SK-N-SH (cell line): ENCODE measurements at regions of chr6 and their contacts with region 1.

Region 1: GRCh38 chr6:11064836-11065235 is 20.7 kb upstream of the ELOVL2 start:
- DNase-seq: peak; percentile 39
- H3K4me3 ChIP-seq: no peak overlapping the region
- H3K27ac ChIP-seq: no peak overlapping the region
- H3K4me1 ChIP-seq: peaks cover 0 to 3% of the 10 kb centered on the region in 2 experiments; a peak in 1 of 4 replicates
- H3K27me3 ChIP-seq: no peaks in the 10 kb centered on the region
- CTCF ChIP-seq: no peak
- EP300 ChIP-seq: no peak
- RAD21 ChIP-seq: no peak

Region 2: DNA sequence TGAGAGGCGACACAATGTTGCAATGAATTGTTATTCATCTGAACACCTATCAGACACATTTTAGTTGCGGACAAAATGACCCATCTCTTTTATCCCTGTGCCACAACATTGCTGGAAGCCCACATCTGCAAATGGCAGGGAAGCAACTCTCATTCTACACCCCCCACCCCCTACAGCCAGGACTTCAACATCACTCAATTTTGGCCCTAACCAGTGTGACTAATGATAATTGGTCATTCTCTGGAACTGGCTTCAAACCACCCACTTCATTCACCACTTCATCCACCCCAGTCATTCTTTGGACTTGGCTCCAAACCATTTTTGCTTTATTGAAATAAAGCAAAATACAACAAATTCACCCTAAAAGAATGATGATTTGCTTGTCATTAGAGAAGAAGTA is 184.5 kb before region 1 on chr6:
- CTCF ChIA-PET with region 1: no interaction called
- POLR2A ChIA-PET with region 1: no interaction called
- DNase-seq: no peak
- H3K4me3 ChIP-seq: no peak overlapping the region
- H3K27ac ChIP-seq: no peak overlapping the region
- H3K4me1 ChIP-seq: no peaks in the 10 kb centered on the region
- H3K27me3 ChIP-seq: no peaks in the 10 kb centered on the region; the same call in 1 of the 2 replicates
- CTCF ChIP-seq: no peak
- EP300 ChIP-seq: no peak
- RAD21 ChIP-seq: no peak

Region 3: DNA sequence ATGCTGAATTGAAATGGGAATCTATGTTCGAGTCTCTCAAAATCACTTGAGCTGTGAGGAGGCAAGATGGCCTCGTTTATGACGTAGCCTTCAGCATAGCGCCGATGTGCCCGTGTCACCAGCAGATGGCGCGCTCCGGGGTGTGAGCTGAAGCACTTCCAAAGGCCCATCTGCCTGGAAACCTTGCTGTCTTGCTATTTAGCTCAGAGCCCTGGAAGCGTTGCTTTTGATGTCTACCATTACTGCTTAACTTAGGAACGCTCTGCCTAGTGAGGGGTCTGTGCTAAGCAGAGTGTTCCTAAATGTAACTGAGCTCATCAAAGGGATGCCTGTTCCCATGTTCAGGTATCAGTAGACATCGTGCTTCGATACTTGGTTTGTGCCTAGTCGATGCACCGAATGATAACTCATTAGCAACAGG is 110.2 kb before region 1 on chr6:
- CTCF ChIA-PET with region 1: interaction called, 38 read pairs
- POLR2A ChIA-PET with region 1: interaction called, 4 read pairs
- DNase-seq: peak; percentile 60
- H3K4me3 ChIP-seq: peak overlapping the region in 1 of 2 experiments; percentile 12; a peak in 1 of 4 replicates
- H3K27ac ChIP-seq: no peak overlapping the region
- H3K4me1 ChIP-seq: no peaks in the 10 kb centered on the region; a peak in 1 of 4 replicates
- H3K27me3 ChIP-seq: no peaks in the 10 kb centered on the region
- CTCF ChIP-seq: peak; percentile 69
- EP300 ChIP-seq: no peak
- RAD21 ChIP-seq: peak; percentile 64

Region 4: DNA sequence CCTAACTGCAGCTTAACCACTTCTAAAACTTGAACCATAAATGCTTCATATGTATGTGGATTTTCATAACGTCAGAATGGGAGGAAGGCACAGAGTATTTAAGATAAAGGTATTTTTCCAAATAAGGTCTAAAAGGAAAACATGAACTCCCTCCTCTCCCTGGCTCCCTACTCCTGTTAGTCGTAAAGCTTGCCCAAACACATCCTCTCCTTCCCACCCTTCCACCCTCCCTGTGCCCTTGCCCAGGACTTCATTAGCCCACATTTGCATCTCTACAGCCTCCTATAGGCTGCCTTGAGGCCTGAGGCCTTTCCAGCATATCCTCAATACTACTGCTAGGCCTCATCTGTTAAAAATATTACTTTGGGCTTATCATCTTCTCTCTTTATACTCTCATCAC is 11.7 kb after region 1 on chr6:
- CTCF ChIA-PET with region 1: interaction called, 11 read pairs
- POLR2A ChIA-PET with region 1: no interaction called
- DNase-seq: no peak
- H3K4me3 ChIP-seq: no peak overlapping the region
- H3K27ac ChIP-seq: no peak overlapping the region
- H3K4me1 ChIP-seq: no peaks in the 10 kb centered on the region
- H3K27me3 ChIP-seq: no peaks in the 10 kb centered on the region
- CTCF ChIP-seq: no peak
- EP300 ChIP-seq: no peak
- RAD21 ChIP-seq: no peak

Region 5: DNA sequence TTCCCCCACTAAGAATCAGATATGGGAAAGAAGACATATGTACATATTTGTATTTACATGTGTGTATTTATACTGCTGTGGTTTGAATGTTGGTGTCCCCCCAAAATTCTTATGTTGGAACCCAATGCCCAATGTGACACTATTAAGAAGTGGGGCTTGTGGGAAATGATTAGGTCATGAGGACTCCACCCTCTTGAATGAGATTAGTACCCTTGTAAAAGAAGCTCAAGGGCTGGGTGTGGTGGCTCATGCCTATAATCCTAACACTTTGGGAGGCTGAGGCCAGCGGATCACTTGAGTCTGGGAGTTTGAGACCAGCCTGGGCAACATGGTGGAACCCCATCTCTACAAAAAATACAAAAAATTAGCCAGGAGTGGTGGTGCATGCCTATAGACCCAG is 24.9 kb after region 1 on chr6:
- CTCF ChIA-PET with region 1: interaction called, 14 read pairs
- POLR2A ChIA-PET with region 1: no interaction called
- DNase-seq: no peak
- H3K4me3 ChIP-seq: no peak overlapping the region
- H3K27ac ChIP-seq: no peak overlapping the region
- H3K4me1 ChIP-seq: peaks cover 0 to 5% of the 10 kb centered on the region in 2 experiments; a peak in 2 of 4 replicates
- H3K27me3 ChIP-seq: no peaks in the 10 kb centered on the region
- CTCF ChIP-seq: no peak
- EP300 ChIP-seq: no peak
- RAD21 ChIP-seq: no peak